ENCODE measurements at regions of chr18 and their contacts with region 1.

Region 1: GRCh38 chr18:31954349-31954748 is 11.4 kb upstream of the TRAPPC8 start:
- DNase-seq: no peak
- ATAC-seq: no peak
- H3K4me3 ChIP-seq: no peak overlapping the region
- H3K4me3 Mint-ChIP-seq: no peak overlapping the region
- H3K27ac ChIP-seq: no peak overlapping the region
- H3K27ac Mint-ChIP-seq: no peak overlapping the region
- H3K4me1 ChIP-seq: no peaks in the 10 kb centered on the region
- H3K4me1 Mint-ChIP-seq: no peaks in the 10 kb centered on the region
- H3K27me3 ChIP-seq: no peaks in the 10 kb centered on the region
- H3K27me3 Mint-ChIP-seq: no peaks in the 10 kb centered on the region
- CTCF ChIP-seq: no peak

Region 2: DNA sequence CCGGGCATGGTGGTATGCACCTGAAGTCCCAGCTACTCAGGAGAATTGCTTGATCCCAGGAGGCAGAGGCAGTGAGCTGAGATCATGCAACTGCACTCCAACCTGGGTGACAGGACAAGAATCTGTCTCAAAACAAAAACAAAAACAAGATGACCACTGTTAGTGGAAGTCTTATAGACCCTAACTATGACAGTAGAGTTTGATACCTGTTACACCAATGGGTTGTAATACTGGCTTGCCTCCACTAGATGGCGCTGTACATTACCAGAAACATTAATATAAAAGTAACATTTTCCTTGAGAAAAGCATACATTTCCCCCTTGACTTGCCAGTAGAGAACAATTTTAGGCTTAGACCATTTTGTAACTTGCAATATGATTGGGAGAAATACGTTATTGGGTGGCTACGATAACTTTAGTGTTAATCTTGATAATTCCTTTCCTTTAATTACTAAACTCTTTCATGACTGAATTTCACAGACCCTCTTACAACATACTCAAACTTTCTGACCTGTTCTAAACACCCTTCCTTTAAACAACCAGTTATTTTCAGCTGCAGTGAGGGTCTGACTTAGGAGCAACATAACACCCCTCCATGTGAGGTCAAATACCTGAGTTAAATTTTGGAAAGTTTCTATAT is 213.1 kb before region 1 on chr18:
- CTCF ChIA-PET with region 1: interaction called, 6 read pairs
- POLR2A ChIA-PET with region 1: no interaction called
- intact Hi-C with region 1: loop called (anchors 1 to 2 kb)
- DNase-seq: peak in 8 of 9 experiments; percentile 32 to 70 (median 56)
- ATAC-seq: peak; percentile 51
- H3K4me3 ChIP-seq: no peak overlapping the region
- H3K4me3 Mint-ChIP-seq: no peak overlapping the region
- H3K27ac ChIP-seq: no peak overlapping the region
- H3K27ac Mint-ChIP-seq: no peak overlapping the region
- H3K4me1 ChIP-seq: no peaks in the 10 kb centered on the region
- H3K4me1 Mint-ChIP-seq: no peaks in the 10 kb centered on the region
- H3K27me3 ChIP-seq: no peaks in the 10 kb centered on the region
- H3K27me3 Mint-ChIP-seq: no peaks in the 10 kb centered on the region
- CTCF ChIP-seq: peak; percentile 98

Region 3: GRCh38 chr18:31819106-31819924 is 135.0 kb before region 1 on chr18:
- CTCF ChIA-PET with region 1: interaction called, 5 read pairs
- POLR2A ChIA-PET with region 1: no interaction called
- intact Hi-C with region 1: loop called in 1 of 2 experiments (anchors 1 kb)
- DNase-seq: peak in 2 of 9 experiments; percentile 33 to 46
- ATAC-seq: peak; percentile 42
- H3K4me3 ChIP-seq: no peak overlapping the region
- H3K4me3 Mint-ChIP-seq: no peak overlapping the region
- H3K27ac ChIP-seq: no peak overlapping the region
- H3K27ac Mint-ChIP-seq: no peak overlapping the region
- H3K4me1 ChIP-seq: no peaks in the 10 kb centered on the region
- H3K4me1 Mint-ChIP-seq: no peaks in the 10 kb centered on the region
- H3K27me3 ChIP-seq: no peaks in the 10 kb centered on the region
- H3K27me3 Mint-ChIP-seq: no peaks in the 10 kb centered on the region
- CTCF ChIP-seq: peak; percentile 61

Region 4: DNA sequence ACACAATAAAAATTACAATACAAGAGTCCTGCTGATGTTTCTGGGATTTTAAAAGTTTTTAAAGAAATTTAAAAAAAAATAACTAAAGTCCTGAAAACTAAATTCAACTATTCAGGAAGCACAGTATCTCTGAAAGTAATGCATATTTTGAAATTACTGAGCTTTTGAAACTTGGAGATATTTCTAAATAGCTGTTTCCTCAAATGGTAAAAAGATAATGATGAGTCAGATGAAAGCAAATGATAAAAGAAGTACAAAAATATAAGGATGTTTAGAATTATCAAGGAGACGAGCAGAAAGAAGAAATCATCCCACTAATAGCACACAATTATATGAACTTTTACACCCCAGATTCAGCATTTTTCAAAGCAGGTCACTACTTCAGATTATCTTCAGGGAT is 103.5 kb before region 1 on chr18:
- CTCF ChIA-PET with region 1: no interaction called
- POLR2A ChIA-PET with region 1: no interaction called
- intact Hi-C with region 1: loop called in 1 of 2 experiments (anchors 5 kb)
- DNase-seq: no peak
- ATAC-seq: no peak
- H3K4me3 ChIP-seq: no peak overlapping the region
- H3K4me3 Mint-ChIP-seq: no peak overlapping the region
- H3K27ac ChIP-seq: no peak overlapping the region
- H3K27ac Mint-ChIP-seq: no peak overlapping the region
- H3K4me1 ChIP-seq: no peaks in the 10 kb centered on the region
- H3K4me1 Mint-ChIP-seq: no peaks in the 10 kb centered on the region
- H3K27me3 ChIP-seq: no peaks in the 10 kb centered on the region
- H3K27me3 Mint-ChIP-seq: no peaks in the 10 kb centered on the region
- CTCF ChIP-seq: no peak

Region 5: GRCh38 chr18:31860488-31860887 is 93.9 kb before region 1 on chr18:
- CTCF ChIA-PET with region 1: no interaction called
- POLR2A ChIA-PET with region 1: no interaction called
- intact Hi-C with region 1: loop called in 1 of 2 experiments (anchors 5 kb)
- DNase-seq: no peak
- ATAC-seq: no peak
- H3K4me3 ChIP-seq: no peak overlapping the region
- H3K4me3 Mint-ChIP-seq: no peak overlapping the region
- H3K27ac ChIP-seq: no peak overlapping the region
- H3K27ac Mint-ChIP-seq: no peak overlapping the region
- H3K4me1 ChIP-seq: no peaks in the 10 kb centered on the region
- H3K4me1 Mint-ChIP-seq: no peaks in the 10 kb centered on the region
- H3K27me3 ChIP-seq: no peaks in the 10 kb centered on the region
- H3K27me3 Mint-ChIP-seq: no peaks in the 10 kb centered on the region
- CTCF ChIP-seq: no peak

Region 6: GRCh38 chr18:31920277-31920676 is 34.1 kb before region 1 on chr18:
- CTCF ChIA-PET with region 1: no interaction called
- POLR2A ChIA-PET with region 1: no interaction called
- intact Hi-C with region 1: loop called in 1 of 2 experiments (anchors 5 kb)
- DNase-seq: no peak
- ATAC-seq: no peak
- H3K4me3 ChIP-seq: no peak overlapping the region
- H3K4me3 Mint-ChIP-seq: no peak overlapping the region
- H3K27ac ChIP-seq: no peak overlapping the region
- H3K27ac Mint-ChIP-seq: peak overlapping the region; percentile 3
- H3K4me1 ChIP-seq: no peaks in the 10 kb centered on the region
- H3K4me1 Mint-ChIP-seq: peaks cover 13% of the 10 kb centered on the region
- H3K27me3 ChIP-seq: no peaks in the 10 kb centered on the region
- H3K27me3 Mint-ChIP-seq: no peaks in the 10 kb centered on the region
- CTCF ChIP-seq: no peak

Region 7: DNA sequence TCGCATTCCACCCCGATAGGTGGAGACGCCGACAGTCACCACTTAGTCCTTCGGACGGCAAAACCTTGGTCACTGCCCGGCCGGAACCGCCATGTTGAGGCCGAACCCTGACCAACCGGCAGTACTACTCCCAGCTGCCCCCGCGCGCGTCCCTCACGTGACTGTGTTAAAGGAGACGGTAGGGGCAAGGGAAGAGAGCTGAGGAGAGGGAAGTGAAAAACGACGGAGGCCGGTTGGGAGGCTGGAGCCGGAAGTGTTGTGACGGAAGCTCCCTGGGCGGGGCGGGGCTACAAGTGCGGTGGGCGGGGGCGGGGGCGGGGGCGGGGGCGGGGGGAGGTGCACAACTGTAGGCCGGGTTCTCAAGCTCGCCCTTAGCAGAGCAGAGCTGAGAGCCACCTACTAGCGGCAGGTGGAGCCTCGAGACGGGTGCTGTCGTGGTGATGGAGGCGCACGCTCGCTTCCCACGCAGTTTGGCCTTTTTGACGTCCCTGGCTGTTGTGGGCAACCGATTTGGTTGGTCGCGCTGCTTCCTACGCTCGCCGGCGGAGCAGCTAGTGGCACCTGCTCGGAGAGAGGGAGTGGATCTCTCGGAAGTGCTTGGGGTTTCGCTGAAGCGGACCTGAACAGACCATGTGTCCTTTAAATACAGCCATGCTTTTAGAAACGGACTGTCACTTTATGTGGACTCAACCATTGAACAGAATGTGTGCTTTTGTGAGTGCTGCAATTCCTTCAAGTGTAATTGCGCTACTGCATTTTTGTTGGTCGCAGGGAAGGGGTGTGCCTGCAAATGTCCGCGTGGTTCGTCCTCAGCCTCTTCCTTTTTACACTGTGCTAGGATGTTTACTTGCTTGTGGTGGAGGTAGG is 11.1 kb before region 1 on chr18 and contains the start of gene TRAPPC8:
- CTCF ChIA-PET with region 1: interaction called, 11 read pairs
- POLR2A ChIA-PET with region 1: interaction called, 4 read pairs
- intact Hi-C with region 1: loop called (anchors 1 to 2 kb)
- DNase-seq: peak; percentile 80 to 97 (median 90)
- ATAC-seq: peak; percentile 87
- H3K4me3 ChIP-seq: peak within 1 kb of the TSS; percentile 97 to 98
- H3K4me3 Mint-ChIP-seq: peak within 1 kb of the TSS; percentile 99
- H3K27ac ChIP-seq: peak within 1 kb of the TSS; percentile 90 to 98
- H3K27ac Mint-ChIP-seq: peak within 1 kb of the TSS; percentile 98
- H3K4me1 ChIP-seq: peaks cover 25% of the 10 kb centered on the region
- H3K4me1 Mint-ChIP-seq: peaks cover 46% of the 10 kb centered on the region
- H3K27me3 ChIP-seq: no peaks in the 10 kb centered on the region
- H3K27me3 Mint-ChIP-seq: no peaks in the 10 kb centered on the region
- CTCF ChIP-seq: no peak
- total RNA-seq, gene TRAPPC8: 23.6 to 24.9 TPM

Measured in CD8-positive, alpha-beta T cell (primary cell).